Activated B cell treated with CpG ODN at 0.5 μM for 24 hours (primary cell): ENCODE measurements at regions of chr3 and their contacts with region 1.

Region 1: GRCh38 chr3:52770496-52771333 is at the start of gene NEK4:
- DNase-seq: peak; percentile 80
- ATAC-seq: peak; percentile 95
- H3K4me3 Mint-ChIP-seq: peak within 1 kb of the TSS; percentile 94
- H3K27ac Mint-ChIP-seq: peak within 1 kb of the TSS; percentile 95
- H3K4me1 Mint-ChIP-seq: peaks cover 17% of the 10 kb centered on the region
- H3K27me3 Mint-ChIP-seq: no peaks in the 10 kb centered on the region
- CTCF ChIP-seq: no peak
- total RNA-seq, gene NEK4: 23.0 and 24.5 TPM in 2 replicates

Region 2: DNA sequence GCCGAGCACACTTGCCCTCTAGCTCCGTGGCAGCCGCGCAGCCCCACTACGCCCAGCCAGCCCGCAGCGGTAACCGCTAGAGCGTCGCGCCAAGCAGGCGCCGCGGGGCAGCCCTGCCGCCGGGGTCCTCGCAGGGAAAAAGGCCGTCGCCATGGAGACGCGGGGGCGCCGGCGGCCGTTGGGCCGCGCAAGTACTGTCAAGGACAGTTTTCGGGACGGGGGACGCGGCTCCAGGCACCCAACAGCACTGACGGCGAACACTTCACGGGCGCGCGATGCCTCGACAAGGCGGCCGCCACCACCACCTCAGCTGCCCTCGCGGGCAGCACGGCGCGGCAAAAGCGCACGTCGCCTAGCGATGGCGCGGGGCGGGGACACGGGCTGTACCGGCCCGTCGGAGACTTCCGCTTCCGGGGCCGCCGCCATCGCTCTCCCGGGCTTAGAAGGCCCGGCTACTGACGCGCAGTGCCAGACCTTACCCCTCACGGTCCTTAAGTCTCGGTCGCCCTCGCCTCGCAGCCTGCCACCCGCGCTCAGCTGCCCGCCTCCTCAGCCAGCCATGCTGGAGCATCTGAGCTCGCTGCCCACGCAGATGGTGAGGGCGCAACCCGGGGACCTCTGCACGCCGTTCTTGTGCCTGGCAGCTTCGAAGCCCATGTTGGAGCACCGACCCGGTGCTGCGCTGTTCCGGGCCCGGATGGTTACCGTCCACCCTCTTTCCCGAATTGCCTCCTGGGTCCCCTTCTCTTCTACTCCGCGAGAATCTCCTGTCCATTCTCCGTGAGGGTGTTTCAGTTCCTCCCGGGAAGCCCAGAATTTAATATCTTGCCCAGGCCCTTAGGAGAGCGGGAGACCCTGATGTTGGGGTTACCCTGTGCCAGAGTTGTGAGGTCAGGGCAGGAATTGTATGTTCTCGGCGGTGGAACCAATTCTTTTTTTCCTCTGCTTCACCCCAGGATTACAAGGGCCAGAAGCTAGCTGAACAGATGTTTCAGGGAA is 64.7 kb before region 1 on chr3 and contains the starts of genes GLT8D1 and SPCS1:
- CTCF ChIA-PET with region 1: no interaction called
- POLR2A ChIA-PET with region 1: interaction called, 4 read pairs
- intact Hi-C with region 1: loop called (anchors 2 kb)
- DNase-seq: peak; percentile 87
- ATAC-seq: peak; percentile 87
- H3K4me3 Mint-ChIP-seq: peak within 1 kb of the TSS; percentile 94
- H3K27ac Mint-ChIP-seq: peak within 1 kb of the TSS; percentile 92
- H3K4me1 Mint-ChIP-seq: peaks cover 48% of the 10 kb centered on the region
- H3K27me3 Mint-ChIP-seq: no peaks in the 10 kb centered on the region
- CTCF ChIP-seq: no peak
- total RNA-seq, gene GLT8D1: 20.4 and 22.2 TPM in 2 replicates
- total RNA-seq, gene SPCS1: 78.0 and 79.4 TPM in 2 replicates

Region 3: GRCh38 chr3:52798978-52799476 is 28.3 kb after region 1 on chr3:
- CTCF ChIA-PET with region 1: interaction called, 4 read pairs
- POLR2A ChIA-PET with region 1: interaction called, 10 read pairs
- intact Hi-C with region 1: loop called (anchors 1 kb)
- DNase-seq: no peak
- ATAC-seq: no peak
- H3K4me3 Mint-ChIP-seq: no peak overlapping the region
- H3K27ac Mint-ChIP-seq: no peak overlapping the region
- H3K4me1 Mint-ChIP-seq: no peaks in the 10 kb centered on the region
- H3K27me3 Mint-ChIP-seq: no peaks in the 10 kb centered on the region
- CTCF ChIP-seq: no peak

Region 4: DNA sequence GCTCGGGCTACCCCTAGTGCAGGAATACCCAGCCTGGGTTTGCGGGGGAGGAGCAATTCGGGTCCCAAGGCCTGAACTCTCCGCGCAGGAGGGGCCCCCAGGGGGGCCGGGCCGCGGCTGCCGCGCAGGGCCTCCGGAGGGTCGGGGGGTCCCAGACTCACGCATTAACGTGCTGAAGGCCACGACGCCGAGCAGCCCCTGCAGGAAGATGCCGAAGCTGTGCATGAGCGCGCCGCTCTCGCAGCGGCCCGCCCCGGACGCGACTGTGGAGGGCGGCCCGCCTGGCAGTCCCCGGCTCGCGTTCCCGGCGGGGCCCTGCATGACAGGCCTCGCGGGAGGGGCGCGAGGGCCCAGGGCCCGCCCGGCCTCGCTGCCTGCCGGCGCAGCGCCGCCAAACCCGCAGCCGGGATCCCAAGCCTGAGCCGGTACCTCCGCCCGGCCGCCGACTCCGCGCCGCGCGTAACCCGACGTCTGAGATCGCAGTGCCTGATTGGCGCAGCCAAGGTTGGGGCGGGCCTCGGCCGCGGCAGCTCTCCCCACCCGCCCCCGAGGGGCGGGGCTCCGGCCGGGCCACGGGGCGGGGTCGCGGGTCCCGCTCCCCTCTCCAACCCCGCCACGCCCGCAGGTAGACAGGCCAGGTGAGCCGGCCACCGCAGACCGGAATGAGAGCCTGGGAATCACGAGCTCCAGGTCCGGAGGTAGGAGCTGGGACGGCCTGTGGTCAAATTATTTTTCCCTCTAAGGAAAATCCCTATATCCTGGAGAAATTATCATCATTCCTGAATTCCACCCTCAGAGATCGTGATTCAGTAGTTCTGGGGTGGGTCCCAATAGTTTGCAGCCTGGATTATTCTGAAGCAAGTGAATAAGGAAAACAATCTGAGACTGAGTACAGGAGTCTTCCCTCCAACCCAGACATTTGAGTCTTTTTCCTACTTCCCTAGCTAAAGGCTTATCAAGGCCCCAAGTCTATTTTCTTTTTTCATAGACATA is 126.7 kb after region 1 on chr3 and contains the start of gene STIMATE:
- CTCF ChIA-PET with region 1: no interaction called
- POLR2A ChIA-PET with region 1: no interaction called
- intact Hi-C with region 1: loop called (anchors 2 kb)
- DNase-seq: peak; percentile 85
- ATAC-seq: peak; percentile 97
- H3K4me3 Mint-ChIP-seq: peak within 1 kb of the TSS; percentile 87
- H3K27ac Mint-ChIP-seq: peak within 1 kb of the TSS; percentile 37
- H3K4me1 Mint-ChIP-seq: peaks cover 45% of the 10 kb centered on the region
- H3K27me3 Mint-ChIP-seq: no peaks in the 10 kb centered on the region
- CTCF ChIP-seq: no peak
- total RNA-seq, gene STIMATE: 20.8 and 25.8 TPM in 2 replicates

Region 5: GRCh38 chr3:53072653-53073552 is 302.2 kb after region 1 on chr3:
- CTCF ChIA-PET with region 1: no interaction called
- POLR2A ChIA-PET with region 1: interaction called, 3 read pairs
- intact Hi-C with region 1: loop called (anchors 1 kb)
- DNase-seq: peak; percentile 76
- ATAC-seq: peak; percentile 94
- H3K4me3 Mint-ChIP-seq: peak overlapping the region; percentile 92
- H3K27ac Mint-ChIP-seq: peak overlapping the region; percentile 89
- H3K4me1 Mint-ChIP-seq: peaks cover 13% of the 10 kb centered on the region
- H3K27me3 Mint-ChIP-seq: no peaks in the 10 kb centered on the region
- CTCF ChIP-seq: peak; percentile 39